SK-N-SH (cell line): ENCODE measurements at regions of chr2 and their contacts with region 1.

Region 1: GRCh38 chr2:225660262-225661131 is 261.0 kb downstream of the NYAP2 start:
- DNase-seq: peak; percentile 58
- H3K4me3 ChIP-seq: no peak overlapping the region; a peak in 1 of 4 replicates
- H3K27ac ChIP-seq: no peak overlapping the region
- H3K4me1 ChIP-seq: no peaks in the 10 kb centered on the region
- H3K27me3 ChIP-seq: no peaks in the 10 kb centered on the region
- CTCF ChIP-seq: peak; percentile 97
- EP300 ChIP-seq: no peak
- RAD21 ChIP-seq: peak; percentile 98

Region 2: GRCh38 chr2:225002039-225002655 is 658.4 kb before region 1 on chr2:
- CTCF ChIA-PET with region 1: interaction called, 23 read pairs
- POLR2A ChIA-PET with region 1: no interaction called
- DNase-seq: peak; percentile 42
- H3K4me3 ChIP-seq: peak overlapping the region in 1 of 2 experiments; percentile 6; a peak in 1 of 4 replicates
- H3K27ac ChIP-seq: no peak overlapping the region
- H3K4me1 ChIP-seq: peaks cover 0 to 4% of the 10 kb centered on the region in 2 experiments; a peak in 2 of 4 replicates
- H3K27me3 ChIP-seq: no peaks in the 10 kb centered on the region
- CTCF ChIP-seq: peak; percentile 86
- EP300 ChIP-seq: no peak
- RAD21 ChIP-seq: peak; percentile 95

Region 3: DNA sequence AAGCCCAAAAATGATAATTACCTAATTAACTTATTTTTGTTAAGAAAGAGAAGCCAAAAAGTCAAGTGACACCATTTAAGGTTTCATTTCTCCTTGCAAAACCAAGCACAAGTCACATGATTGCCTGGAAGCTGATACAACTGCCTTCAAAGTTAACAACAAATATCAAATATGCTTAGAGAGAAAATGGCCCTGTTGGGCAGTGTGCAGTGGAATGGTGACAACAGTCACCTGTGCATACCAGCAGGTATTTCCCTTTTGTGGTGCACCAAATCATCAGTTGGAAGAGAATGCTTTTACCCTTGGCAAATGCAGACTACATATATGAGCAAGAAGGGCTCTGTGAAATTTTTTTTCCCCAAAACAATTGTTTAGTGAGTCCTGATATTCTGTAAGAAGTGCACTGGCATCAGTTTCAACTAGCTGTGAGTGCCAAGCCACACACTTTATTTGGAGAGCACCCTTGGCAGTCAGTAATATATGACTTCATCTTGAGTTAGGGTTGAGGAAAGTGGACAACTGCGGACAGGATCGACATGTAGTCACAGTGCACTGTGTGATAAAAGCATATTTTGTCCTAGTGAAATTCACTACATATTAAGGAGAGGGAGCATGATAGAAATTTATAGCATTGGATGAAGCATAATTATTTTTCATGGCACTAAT is 543.3 kb before region 1 on chr2:
- CTCF ChIA-PET with region 1: interaction called, 109 read pairs
- POLR2A ChIA-PET with region 1: no interaction called
- DNase-seq: no peak
- H3K4me3 ChIP-seq: no peak overlapping the region
- H3K27ac ChIP-seq: no peak overlapping the region
- H3K4me1 ChIP-seq: peaks cover 5 to 8% of the 10 kb centered on the region in 2 experiments; a peak in 3 of 4 replicates
- H3K27me3 ChIP-seq: no peaks in the 10 kb centered on the region
- CTCF ChIP-seq: no peak
- EP300 ChIP-seq: no peak
- RAD21 ChIP-seq: no peak

Region 4: GRCh38 chr2:225130093-225130492 is 530.4 kb before region 1 on chr2:
- CTCF ChIA-PET with region 1: interaction called, 109 read pairs
- POLR2A ChIA-PET with region 1: no interaction called
- DNase-seq: no peak
- H3K4me3 ChIP-seq: no peak overlapping the region
- H3K27ac ChIP-seq: no peak overlapping the region
- H3K4me1 ChIP-seq: no peaks in the 10 kb centered on the region
- H3K27me3 ChIP-seq: no peaks in the 10 kb centered on the region
- CTCF ChIP-seq: no peak
- EP300 ChIP-seq: no peak
- RAD21 ChIP-seq: no peak

Region 5: DNA sequence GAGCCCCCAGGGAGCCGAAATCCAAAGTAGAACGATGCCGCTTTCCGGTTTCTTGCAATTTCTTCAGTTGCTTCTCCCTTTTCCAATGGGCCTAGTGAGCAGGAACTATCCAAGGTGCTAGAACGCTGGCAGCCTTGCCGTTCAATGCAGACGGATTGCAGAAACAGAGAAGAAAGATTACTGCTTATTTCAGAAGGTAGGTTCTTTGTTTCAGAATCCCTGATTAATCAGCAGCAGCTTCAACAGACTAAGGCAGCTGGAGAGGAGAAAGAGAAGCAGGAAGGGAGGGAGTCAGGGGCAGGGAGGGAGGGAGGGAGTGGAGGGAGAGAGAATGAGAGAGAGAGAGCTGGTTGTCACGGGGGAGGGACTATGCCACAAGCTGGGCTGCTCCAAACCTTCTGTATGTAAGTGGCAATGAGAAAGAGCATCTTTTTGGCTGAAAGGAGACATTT is 260.4 kb before region 1 on chr2:
- CTCF ChIA-PET with region 1: interaction called, 10 read pairs
- POLR2A ChIA-PET with region 1: no interaction called
- DNase-seq: peak; percentile 17
- H3K4me3 ChIP-seq: no peak overlapping the region; a peak in 1 of 4 replicates
- H3K27ac ChIP-seq: peak overlapping the region in 1 of 2 experiments; percentile 92; a peak in 2 of 4 replicates
- H3K4me1 ChIP-seq: peaks cover 0 to 8% of the 10 kb centered on the region in 2 experiments; a peak in 2 of 4 replicates
- H3K27me3 ChIP-seq: no peaks in the 10 kb centered on the region
- CTCF ChIP-seq: no peak
- EP300 ChIP-seq: peak in 1 of 2 experiments; percentile 10; a peak in 1 of 4 replicates
- RAD21 ChIP-seq: no peak